ENCODE measurements at regions of chr10 and their contacts with region 1.

Region 1: GRCh38 chr10:95290461-95291364 is at the start of gene PDLIM1:
- DNase-seq: peak; percentile 84
- total RNA-seq, gene PDLIM1: 334 TPM

Region 2: DNA sequence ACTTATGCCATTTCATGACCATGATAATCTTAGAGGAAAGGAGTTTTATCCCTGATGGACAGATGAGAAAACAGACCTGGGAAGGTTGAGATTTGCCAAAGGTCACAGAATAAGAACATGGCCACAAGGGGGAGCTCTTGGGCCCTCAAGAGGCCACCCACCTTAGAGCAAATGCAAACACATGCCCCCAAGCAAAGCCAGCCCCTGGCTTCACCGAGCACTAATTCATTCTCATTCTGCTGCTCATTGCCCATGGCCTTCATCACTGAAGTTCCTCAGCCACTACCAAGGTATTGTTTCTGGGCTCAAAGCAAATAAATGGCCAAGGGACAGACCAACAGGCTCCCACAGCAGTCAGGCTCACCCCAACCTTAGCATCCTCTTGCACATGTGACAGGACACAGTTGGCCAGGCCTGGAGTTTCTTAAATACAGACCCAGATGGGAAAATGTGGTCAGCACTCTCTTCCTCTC is 44.1 kb before region 1 on chr10:
- intact Hi-C with region 1: loop called (anchors 5 kb)
- DNase-seq: no peak

Region 3: GRCh38 chr10:95308389-95309302 is 17.9 kb after region 1 on chr10:
- intact Hi-C with region 1: loop called (anchors 2 kb)
- DNase-seq: peak; percentile 88

Region 4: DNA sequence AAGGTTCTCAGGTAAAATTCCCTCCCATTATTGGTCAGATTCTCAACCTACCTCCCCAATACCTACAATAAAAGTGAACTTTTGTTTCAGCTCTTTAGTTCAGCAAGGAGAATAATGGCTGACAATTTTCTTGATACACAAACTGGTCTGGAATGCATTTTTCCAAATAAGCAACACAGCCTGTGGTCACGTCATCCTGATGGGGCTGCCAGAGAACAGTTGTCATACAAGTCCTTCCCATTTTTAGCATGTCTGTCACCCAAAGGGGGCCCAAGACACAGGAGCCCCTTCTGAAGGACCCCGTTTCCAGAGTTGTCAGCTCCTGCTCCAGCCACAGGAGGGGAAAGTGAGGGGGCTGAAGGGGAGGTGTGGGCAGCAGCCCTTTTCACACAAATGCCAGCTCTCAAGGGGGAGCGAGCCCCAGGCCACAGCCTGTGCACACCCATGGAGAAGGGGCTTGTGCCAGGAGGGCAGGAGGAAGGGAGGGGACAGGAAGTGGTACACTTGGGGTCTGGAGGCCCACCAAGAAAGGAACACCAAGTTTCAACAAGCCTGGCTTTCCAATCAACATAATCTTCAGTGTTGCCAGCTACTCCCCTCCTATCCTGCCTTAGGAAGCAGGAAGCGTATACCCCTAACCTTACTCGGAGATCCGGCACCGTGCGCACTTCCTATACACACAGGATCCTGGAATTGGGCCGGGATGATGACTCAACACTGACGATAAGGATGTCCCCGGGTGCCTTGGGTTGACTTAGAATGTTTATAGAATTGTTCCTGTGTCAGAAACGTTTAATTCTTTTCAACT is 43.5 kb after region 1 on chr10:
- intact Hi-C with region 1: no loop called
- DNase-seq: peak; percentile 88

Region 5: DNA sequence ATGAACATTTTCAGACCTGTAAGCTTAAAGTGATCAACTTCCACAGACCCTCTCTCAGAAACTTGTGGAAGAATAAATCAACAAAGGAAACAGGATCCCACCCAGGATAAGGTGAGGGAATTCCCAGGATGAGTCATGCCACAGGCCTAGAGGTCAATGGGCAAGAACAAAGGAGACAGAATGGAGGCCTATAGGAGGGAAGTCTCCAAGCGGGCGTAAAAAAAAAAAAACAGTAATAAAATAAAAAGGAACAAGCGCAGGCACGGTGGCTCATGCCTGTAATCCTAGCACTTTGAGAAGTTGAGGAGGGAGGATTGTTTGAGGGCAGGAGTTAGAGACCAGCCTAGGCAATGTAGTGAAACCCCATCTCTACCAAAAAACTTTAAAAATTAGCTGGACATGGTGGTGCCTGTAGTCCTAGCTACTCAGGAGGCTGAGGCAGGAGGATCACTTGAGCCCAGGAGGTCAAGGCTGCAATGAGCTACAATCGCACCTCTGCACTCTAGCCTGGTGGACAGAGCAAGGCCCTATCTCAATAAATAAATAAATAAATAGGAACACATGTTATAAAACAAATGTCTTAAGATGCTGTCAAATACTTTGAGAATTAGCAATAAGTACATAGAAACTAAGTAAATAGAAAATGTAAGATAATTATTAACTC is 262.1 kb after region 1 on chr10:
- intact Hi-C with region 1: no loop called
- DNase-seq: no peak

Measured in cardiac septum (tissue), 1 donor.